ENCODE measurements at regions of chr12 and their contacts with region 1.

Region 1: GRCh38 chr12:42589465-42590329 is at the start of gene PRICKLE1:
- DNase-seq: peak; percentile 63
- ATAC-seq: peak; percentile 86 to 89
- total RNA-seq, gene PRICKLE1: 9.4 to 15.3 TPM

Region 2: GRCh38 chr12:42810006-42810405 is 220.3 kb after region 1 on chr12:
- intact Hi-C with region 1: loop called in 1 of 2 experiments (anchors 10 kb)
- DNase-seq: no peak
- ATAC-seq: no peak

Region 3: GRCh38 chr12:43282106-43282505 is 692.4 kb after region 1 on chr12:
- intact Hi-C with region 1: loop called in 1 of 2 experiments (anchors 2 kb)
- DNase-seq: no peak
- ATAC-seq: peak in 1 of 2 donors; percentile 57

Region 4: GRCh38 chr12:43338848-43339526 is 749.3 kb after region 1 on chr12:
- intact Hi-C with region 1: loop called in 1 of 2 experiments (anchors 5 kb)
- DNase-seq: no peak
- ATAC-seq: peak; percentile 95 to 97